ENCODE measurements at regions of chr7 and their contacts with region 1.

Region 1: DNA sequence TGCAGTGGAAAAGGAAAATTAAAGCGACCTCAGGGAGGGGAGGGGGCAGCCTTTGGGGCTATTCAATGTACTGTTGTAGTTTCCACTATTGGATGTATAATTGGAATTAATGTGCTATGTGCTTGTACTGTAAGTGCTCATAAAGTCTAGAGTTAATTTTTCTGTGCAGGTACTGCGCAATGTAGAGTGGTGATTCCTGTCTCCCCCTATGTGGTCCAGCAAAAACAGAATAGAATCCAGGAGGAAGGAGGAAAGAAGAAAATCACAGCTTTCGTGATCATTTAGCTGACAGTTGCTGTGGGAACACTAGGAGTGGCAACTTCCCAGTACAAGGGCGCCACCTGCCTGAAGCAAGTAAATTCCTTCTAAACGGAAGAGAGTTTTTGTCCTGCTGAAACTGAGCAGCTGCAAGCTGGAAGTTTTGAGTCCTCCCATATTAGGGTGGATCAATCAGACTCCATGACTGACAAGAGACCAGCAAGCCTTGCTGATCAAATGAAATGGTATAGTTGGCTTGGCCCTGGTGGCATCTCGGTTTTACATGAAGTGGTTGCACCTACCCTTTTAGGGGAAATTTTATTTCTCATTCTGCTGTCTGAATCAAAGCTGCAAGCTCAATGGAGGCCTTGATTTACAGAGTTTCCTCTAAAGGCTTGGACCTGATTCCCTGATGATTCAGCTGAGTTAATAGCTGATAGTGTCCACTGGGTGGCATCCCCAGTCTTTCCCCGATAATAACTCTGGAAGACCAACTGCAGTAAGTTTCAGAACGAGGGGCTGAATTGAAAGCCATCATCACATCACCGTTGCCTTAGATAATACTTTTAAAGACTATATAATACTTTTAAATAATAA is 299.8 kb downstream of the HGF start:
- DNase-seq: no peak
- H3K4me3 ChIP-seq: no peak overlapping the region
- H3K27ac ChIP-seq: no peak overlapping the region
- H3K4me1 ChIP-seq: no peaks in the 10 kb centered on the region
- H3K27me3 ChIP-seq: no peaks in the 10 kb centered on the region
- CTCF ChIP-seq: peak; percentile 40 to 84 (median 55)
- POLR2A ChIP-seq: no peak

Region 2: GRCh38 chr7:80699721-80700256 is 770.3 kb before region 1 on chr7:
- intact Hi-C with region 1: loop called (anchors 5 kb)
- DNase-seq: no peak
- H3K4me3 ChIP-seq: no peak overlapping the region
- H3K27ac ChIP-seq: no peak overlapping the region
- H3K4me1 ChIP-seq: no peaks in the 10 kb centered on the region
- H3K27me3 ChIP-seq: no peaks in the 10 kb centered on the region
- CTCF ChIP-seq: no peak
- POLR2A ChIP-seq: no peak

Region 3: GRCh38 chr7:80967071-80967916 is 502.8 kb before region 1 on chr7:
- intact Hi-C with region 1: no loop called
- DNase-seq: no peak
- H3K4me3 ChIP-seq: no peak overlapping the region
- H3K27ac ChIP-seq: no peak overlapping the region
- H3K4me1 ChIP-seq: no peaks in the 10 kb centered on the region
- H3K27me3 ChIP-seq: no peaks in the 10 kb centered on the region
- CTCF ChIP-seq: no peak
- POLR2A ChIP-seq: no peak

Region 4: DNA sequence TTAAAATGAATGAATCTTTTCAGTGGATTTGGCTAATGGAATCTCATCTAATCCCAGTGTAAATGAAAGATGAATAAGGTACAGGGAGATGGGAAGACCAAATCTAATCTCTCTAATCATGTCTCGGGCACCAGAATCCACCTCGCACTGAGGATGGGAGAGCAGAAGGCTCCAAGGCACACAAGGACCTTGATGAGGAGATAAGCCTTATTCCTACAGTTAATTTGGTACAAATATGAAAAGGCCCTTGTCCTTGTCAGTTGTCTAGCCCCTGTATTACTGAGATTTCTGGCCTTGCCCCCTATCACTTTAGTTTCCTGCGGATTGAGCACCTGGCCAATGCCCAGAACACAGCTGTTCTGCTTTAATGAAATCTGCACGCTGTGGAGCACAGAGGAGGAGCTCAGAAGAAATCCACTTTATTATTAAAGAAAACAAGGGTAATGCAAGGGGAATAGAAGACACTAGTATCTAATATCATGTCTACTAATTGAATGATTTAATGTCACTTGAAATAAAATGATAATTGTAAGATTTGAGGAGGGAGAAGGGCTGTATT is 621.1 kb after region 1 on chr7:
- intact Hi-C with region 1: no loop called
- DNase-seq: no peak
- H3K4me3 ChIP-seq: no peak overlapping the region
- H3K27ac ChIP-seq: no peak overlapping the region
- H3K4me1 ChIP-seq: no peaks in the 10 kb centered on the region
- H3K27me3 ChIP-seq: no peaks in the 10 kb centered on the region
- CTCF ChIP-seq: no peak
- POLR2A ChIP-seq: no peak